Natural killer cell (primary cell): ENCODE measurements at regions of chr20 and their contacts with region 1.

Region 1: DNA sequence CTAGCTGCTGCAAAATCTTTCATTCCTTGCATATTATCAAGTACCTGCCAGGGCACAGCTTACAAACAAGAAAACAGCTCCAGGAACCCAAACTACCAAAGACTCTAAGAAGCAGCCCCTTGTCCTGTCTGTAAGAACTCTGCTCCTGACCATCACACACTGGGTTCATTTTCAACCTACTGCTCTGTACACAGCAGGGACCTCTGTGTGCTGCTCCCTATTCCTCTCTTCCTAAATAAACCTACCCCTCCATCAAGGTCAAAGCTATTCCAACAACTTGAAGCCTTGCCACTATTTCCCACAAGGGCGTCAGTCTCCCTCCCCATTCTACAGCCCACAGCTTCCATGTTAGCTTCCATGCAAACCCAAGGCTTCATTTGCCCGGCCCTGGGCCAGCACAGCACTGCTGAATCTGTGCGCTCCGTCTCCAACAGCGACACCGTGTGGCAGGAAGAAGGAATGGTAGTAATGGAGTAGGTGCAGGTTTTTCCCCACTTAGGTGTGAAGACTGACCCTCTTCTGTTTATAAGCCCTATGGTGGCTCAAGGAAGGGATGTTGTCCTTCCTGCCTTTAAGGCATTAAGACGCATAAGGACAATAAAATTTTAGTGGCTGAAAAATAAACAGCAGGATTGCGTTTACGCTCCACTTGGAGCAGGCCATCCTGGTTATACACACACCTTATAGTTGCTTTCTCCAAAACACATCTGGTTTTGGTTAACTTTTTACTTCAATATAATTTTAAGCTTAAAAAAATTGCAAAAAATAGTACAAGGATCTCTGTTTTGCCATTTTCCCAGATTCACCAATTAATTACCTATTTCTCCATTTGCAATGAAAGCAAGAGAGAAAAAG is 115.2 kb upstream of the NXT1 start:
- DNase-seq: peak; percentile 30 to 46
- ATAC-seq: peak; percentile 53 to 84 (median 82)
- H3K4me3 ChIP-seq: no peak overlapping the region
- H3K4me3 Mint-ChIP-seq: no peak overlapping the region
- H3K27ac ChIP-seq: no peak overlapping the region
- H3K27ac Mint-ChIP-seq: no peak overlapping the region
- H3K4me1 ChIP-seq: no peaks in the 10 kb centered on the region
- H3K4me1 Mint-ChIP-seq: no peaks in the 10 kb centered on the region
- H3K27me3 ChIP-seq: no peaks in the 10 kb centered on the region
- H3K27me3 Mint-ChIP-seq: peaks cover 9 to 40% of the 10 kb centered on the region in 2 donors
- CTCF ChIP-seq: peak; percentile 68

Region 2: GRCh38 chr20:22691369-22692118 is 543.9 kb before region 1 on chr20:
- intact Hi-C with region 1: loop called (anchors 1 kb)
- DNase-seq: peak; percentile 32 to 62
- ATAC-seq: peak; percentile 72 to 97 (median 72)
- H3K4me3 ChIP-seq: no peak overlapping the region
- H3K4me3 Mint-ChIP-seq: no peak overlapping the region
- H3K27ac ChIP-seq: no peak overlapping the region
- H3K27ac Mint-ChIP-seq: no peak overlapping the region
- H3K4me1 ChIP-seq: peaks cover 13% of the 10 kb centered on the region
- H3K4me1 Mint-ChIP-seq: no peaks in the 10 kb centered on the region
- H3K27me3 ChIP-seq: no peaks in the 10 kb centered on the region
- H3K27me3 Mint-ChIP-seq: peaks cover 0 to 3% of the 10 kb centered on the region in 2 donors
- CTCF ChIP-seq: peak; percentile 74

Region 3: GRCh38 chr20:23048283-23049200 is 186.9 kb before region 1 on chr20:
- intact Hi-C with region 1: loop called (anchors 2 kb)
- DNase-seq: peak; percentile 28 to 33
- ATAC-seq: peak; percentile 74 to 76 (median 75)
- H3K4me3 ChIP-seq: no peak overlapping the region
- H3K4me3 Mint-ChIP-seq: peak overlapping the region; percentile 69
- H3K27ac ChIP-seq: no peak overlapping the region
- H3K27ac Mint-ChIP-seq: no peak overlapping the region
- H3K4me1 ChIP-seq: peaks cover 35% of the 10 kb centered on the region
- H3K4me1 Mint-ChIP-seq: peaks cover 16 to 39% of the 10 kb centered on the region in 2 donors
- H3K27me3 ChIP-seq: peaks cover 31% of the 10 kb centered on the region
- H3K27me3 Mint-ChIP-seq: peaks cover 50 to 65% of the 10 kb centered on the region in 2 donors
- CTCF ChIP-seq: peak; percentile 16

Region 4: DNA sequence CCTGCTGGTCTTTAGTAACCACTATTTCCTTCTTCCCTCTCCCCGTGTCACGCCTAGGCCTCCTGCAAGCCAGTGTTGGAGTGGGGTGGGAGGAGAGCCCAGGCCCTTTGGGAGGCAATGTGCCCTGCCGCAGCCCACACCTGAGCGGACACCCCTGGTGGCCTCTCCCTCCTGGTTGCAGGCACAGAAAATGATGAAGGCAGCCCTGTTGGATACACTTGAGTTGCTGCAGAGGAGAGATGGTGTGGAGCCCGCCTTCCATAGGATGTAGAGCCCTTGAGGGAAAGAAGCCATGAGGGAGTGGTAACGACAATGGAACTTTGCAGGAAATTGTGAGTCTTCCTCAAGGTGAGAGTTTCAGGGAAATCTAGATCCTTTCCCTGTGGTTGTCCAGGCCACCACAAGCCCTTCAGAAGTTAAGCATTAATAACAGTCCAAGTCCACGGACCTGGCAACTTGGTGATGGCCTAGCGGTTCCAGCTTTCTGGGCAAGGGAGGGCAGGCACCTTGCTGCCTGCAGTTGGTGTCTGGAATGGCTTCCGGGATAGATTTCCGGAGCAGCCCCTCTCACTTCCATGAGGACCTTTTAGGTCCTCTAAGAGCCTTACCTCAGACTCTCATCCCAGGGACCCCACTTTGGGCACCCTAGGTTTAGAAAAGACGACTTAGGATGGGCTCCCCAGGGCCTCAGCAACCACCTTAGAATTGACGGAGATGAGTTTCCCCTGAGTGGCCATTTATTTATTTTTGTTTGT is 47.9 kb after region 1 on chr20:
- intact Hi-C with region 1: no loop called
- DNase-seq: no peak
- ATAC-seq: no peak
- H3K4me3 ChIP-seq: no peak overlapping the region
- H3K4me3 Mint-ChIP-seq: no peak overlapping the region
- H3K27ac ChIP-seq: no peak overlapping the region
- H3K27ac Mint-ChIP-seq: no peak overlapping the region
- H3K4me1 ChIP-seq: no peaks in the 10 kb centered on the region
- H3K4me1 Mint-ChIP-seq: no peaks in the 10 kb centered on the region
- H3K27me3 ChIP-seq: no peaks in the 10 kb centered on the region
- H3K27me3 Mint-ChIP-seq: peaks cover 5 to 7% of the 10 kb centered on the region in 2 donors
- CTCF ChIP-seq: no peak